ENCODE measurements at regions of chr9 and their contacts with region 1.

Region 1: DNA sequence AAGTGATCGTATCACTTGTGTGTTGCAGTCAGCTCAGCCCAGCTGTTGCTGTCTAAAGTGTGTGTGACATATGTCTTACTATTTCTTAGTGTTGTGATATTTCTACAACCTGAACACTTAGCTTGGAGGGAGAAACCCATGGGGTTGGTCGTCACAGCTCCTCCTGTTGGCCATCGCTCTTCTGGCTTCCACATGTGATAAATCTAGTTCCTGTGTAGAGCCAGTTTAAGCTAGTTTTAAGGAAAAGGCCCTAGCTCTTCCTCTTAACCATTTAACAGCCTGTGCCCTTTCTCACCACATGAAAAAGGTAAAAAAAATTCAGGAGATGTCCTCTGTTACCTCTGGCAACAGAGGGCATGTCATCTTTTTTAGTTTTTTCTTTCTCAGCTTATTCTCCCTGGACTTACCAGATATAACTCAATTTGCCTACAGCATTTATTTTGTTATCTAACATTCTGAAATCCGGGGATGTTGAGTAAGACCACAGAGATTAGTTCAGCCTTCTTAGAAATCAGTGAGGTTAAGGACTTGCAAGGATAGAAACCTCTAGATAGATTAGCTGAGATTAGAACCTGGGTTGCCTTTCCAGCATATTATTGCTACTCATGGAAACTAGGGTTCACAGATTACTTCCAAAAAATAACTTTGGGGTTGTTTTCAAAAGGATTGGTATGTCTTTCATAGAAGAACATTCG is 100.4 kb downstream of the GAPVD1 start:
- DNase-seq: peak; percentile 39
- ATAC-seq: peak; percentile 82
- H3K4me3 Mint-ChIP-seq: no peak overlapping the region
- H3K27ac Mint-ChIP-seq: peak overlapping the region; percentile 78
- H3K4me1 Mint-ChIP-seq: peaks cover 7% of the 10 kb centered on the region
- H3K27me3 Mint-ChIP-seq: no peaks in the 10 kb centered on the region
- CTCF ChIP-seq: no peak

Region 2: GRCh38 chr9:125241000-125241862 is 120.8 kb before region 1 on chr9 and contains the start of gene HSPA5:
- CTCF ChIA-PET with region 1: interaction called, 12 read pairs
- POLR2A ChIA-PET with region 1: interaction called, 5 read pairs
- DNase-seq: peak; percentile 100
- ATAC-seq: peak; percentile 94
- H3K4me3 Mint-ChIP-seq: peak within 1 kb of the TSS; percentile 98
- H3K27ac Mint-ChIP-seq: peak within 1 kb of the TSS; percentile 100
- H3K4me1 Mint-ChIP-seq: peaks cover 30% of the 10 kb centered on the region
- H3K27me3 Mint-ChIP-seq: peaks cover 2% of the 10 kb centered on the region; the same call in 1 of the 2 replicates
- CTCF ChIP-seq: no peak
- total RNA-seq, gene HSPA5: 224 to 357 TPM (median 224 TPM) in 3 replicates

Region 3: GRCh38 chr9:125255781-125256391 is 106.1 kb before region 1 on chr9:
- CTCF ChIA-PET with region 1: interaction called, 46 read pairs
- POLR2A ChIA-PET with region 1: no interaction called
- DNase-seq: peak; percentile 32
- ATAC-seq: peak; percentile 76
- H3K4me3 Mint-ChIP-seq: no peak overlapping the region
- H3K27ac Mint-ChIP-seq: no peak overlapping the region
- H3K4me1 Mint-ChIP-seq: peaks cover 2% of the 10 kb centered on the region; the same call in 1 of the 2 replicates
- H3K27me3 Mint-ChIP-seq: no peaks in the 10 kb centered on the region
- CTCF ChIP-seq: no peak

Region 4: GRCh38 chr9:125261501-125262293 is 100.3 kb before region 1 on chr9 and contains the start of gene GAPVD1:
- CTCF ChIA-PET with region 1: interaction called, 10 read pairs
- POLR2A ChIA-PET with region 1: no interaction called
- DNase-seq: peak; percentile 92
- ATAC-seq: peak; percentile 97
- H3K4me3 Mint-ChIP-seq: peak within 1 kb of the TSS; percentile 98
- H3K27ac Mint-ChIP-seq: peak within 1 kb of the TSS; percentile 80
- H3K4me1 Mint-ChIP-seq: peaks cover 10% of the 10 kb centered on the region
- H3K27me3 Mint-ChIP-seq: no peaks in the 10 kb centered on the region
- CTCF ChIP-seq: no peak
- total RNA-seq, gene GAPVD1: 33.3 to 34.0 TPM (median 33.8 TPM) in 3 replicates

Region 5: DNA sequence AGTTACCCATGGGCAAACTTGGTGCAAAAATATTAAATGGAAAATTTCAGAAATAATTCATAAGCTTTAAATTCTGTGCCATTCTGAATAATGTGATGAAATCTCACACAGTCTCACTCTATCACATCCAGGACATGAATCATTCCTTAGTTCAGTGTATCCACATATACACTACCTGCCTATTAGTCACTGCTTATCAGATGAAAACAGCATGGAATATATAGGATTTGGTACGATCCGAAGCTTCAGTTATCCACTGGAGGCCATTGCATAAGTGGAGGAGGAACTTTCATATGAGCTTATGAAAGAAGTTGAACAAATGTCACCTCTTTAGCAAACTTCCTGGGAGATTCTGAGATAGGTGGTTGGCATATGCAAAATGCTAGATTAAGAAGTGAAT is 36.2 kb before region 1 on chr9:
- CTCF ChIA-PET with region 1: no interaction called
- POLR2A ChIA-PET with region 1: no interaction called
- DNase-seq: no peak
- ATAC-seq: no peak
- H3K4me3 Mint-ChIP-seq: no peak overlapping the region
- H3K27ac Mint-ChIP-seq: no peak overlapping the region
- H3K4me1 Mint-ChIP-seq: no peaks in the 10 kb centered on the region
- H3K27me3 Mint-ChIP-seq: no peaks in the 10 kb centered on the region
- CTCF ChIP-seq: no peak

Region 6: DNA sequence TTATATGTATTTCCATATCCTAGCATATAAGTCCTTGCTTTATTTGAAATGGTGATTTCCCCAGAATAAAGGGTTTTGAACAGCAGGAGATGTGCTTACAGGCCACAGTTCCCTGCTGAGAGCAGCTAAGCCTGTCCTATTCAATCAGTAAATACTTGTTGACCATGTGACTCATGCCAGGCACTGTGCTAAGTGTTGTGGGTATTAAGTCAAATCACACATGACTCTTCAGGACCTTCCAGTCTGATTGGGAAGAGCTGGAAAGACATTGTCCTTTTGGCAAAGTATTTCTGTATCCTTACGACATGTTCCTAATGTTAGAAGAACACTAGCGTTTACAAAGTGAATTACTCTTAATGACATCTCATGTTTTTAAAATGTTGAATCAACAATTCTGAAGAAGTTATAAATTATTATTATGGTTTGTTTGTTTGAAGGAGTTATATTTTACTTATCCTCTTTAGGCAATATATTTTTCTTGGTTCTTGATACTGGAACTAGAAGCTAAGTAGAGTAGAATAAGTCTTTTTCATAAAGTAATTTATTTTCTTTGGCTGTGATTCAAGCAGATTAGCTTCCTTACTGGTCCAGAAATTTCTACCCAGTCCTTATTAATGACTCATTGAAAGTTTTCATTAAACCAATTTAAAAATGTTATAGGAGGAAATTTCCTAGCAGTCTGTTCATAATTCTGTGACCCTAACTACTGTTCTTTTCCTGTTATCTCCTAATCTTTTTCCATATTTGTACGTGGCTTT is 18.3 kb before region 1 on chr9:
- CTCF ChIA-PET with region 1: interaction called, 11 read pairs
- POLR2A ChIA-PET with region 1: no interaction called
- DNase-seq: peak; percentile 25
- ATAC-seq: peak; percentile 97
- H3K4me3 Mint-ChIP-seq: no peak overlapping the region
- H3K27ac Mint-ChIP-seq: no peak overlapping the region
- H3K4me1 Mint-ChIP-seq: peaks cover 18% of the 10 kb centered on the region
- H3K27me3 Mint-ChIP-seq: no peaks in the 10 kb centered on the region
- CTCF ChIP-seq: no peak

Region 7: DNA sequence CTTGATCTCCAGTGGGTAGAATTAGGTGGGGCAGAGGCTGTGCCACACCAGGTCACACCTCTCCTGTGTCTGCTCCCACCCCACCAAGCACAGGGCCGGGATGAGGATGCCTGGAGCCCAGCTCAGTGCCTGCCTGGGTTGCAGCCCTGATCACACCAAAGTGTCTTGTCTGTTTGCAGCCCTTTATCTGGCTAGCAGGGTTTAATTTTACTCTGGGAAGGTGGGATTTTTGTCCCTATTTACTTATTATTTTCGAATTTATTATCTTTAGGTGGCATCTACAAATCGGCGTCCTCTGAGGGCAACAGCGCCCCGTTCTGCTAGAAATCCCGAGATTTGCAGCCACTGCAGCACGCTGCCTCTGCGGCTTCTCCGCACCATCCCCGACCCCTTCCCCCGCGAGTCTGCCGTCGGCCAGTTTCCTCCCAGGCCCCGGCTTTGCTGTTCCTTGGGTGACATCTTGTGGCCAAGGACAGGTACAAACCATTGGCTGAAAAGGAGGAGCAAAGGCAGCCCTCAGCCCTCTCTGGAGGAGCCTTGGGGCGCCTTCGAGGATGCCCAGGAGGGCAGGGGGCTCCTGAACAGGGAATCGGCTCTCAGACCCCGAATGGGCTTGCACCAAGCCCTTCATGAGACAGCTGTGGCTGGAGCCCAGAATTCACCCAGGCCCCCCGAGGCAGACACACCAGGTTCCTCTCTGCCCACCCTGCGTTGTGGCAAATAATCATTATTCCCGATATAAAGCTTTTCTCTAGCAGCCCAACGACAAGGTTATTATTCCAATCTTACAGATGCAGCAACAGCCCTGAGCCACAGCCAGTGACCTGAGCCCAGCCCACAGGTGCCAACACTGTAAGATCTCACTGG is 12.7 kb after region 1 on chr9:
- CTCF ChIA-PET with region 1: interaction called, 17 read pairs
- POLR2A ChIA-PET with region 1: no interaction called
- DNase-seq: peak; percentile 86
- ATAC-seq: peak; percentile 90
- H3K4me3 Mint-ChIP-seq: peak overlapping the region; percentile 56
- H3K27ac Mint-ChIP-seq: no peak overlapping the region
- H3K4me1 Mint-ChIP-seq: peaks cover 24% of the 10 kb centered on the region
- H3K27me3 Mint-ChIP-seq: peaks cover 4% of the 10 kb centered on the region; the same call in 1 of the 2 replicates
- CTCF ChIP-seq: peak; percentile 73

Region 8: GRCh38 chr9:125468646-125469045 is 106.7 kb after region 1 on chr9:
- CTCF ChIA-PET with region 1: no interaction called
- POLR2A ChIA-PET with region 1: no interaction called
- DNase-seq: no peak
- ATAC-seq: no peak
- H3K4me3 Mint-ChIP-seq: no peak overlapping the region
- H3K27ac Mint-ChIP-seq: no peak overlapping the region
- H3K4me1 Mint-ChIP-seq: peaks cover 17% of the 10 kb centered on the region
- H3K27me3 Mint-ChIP-seq: no peaks in the 10 kb centered on the region
- CTCF ChIP-seq: no peak

Measured in WTC11 (cell line).